A549 (cell line): ENCODE measurements at regions of chr10 and their contacts with region 1.

Region 1: DNA sequence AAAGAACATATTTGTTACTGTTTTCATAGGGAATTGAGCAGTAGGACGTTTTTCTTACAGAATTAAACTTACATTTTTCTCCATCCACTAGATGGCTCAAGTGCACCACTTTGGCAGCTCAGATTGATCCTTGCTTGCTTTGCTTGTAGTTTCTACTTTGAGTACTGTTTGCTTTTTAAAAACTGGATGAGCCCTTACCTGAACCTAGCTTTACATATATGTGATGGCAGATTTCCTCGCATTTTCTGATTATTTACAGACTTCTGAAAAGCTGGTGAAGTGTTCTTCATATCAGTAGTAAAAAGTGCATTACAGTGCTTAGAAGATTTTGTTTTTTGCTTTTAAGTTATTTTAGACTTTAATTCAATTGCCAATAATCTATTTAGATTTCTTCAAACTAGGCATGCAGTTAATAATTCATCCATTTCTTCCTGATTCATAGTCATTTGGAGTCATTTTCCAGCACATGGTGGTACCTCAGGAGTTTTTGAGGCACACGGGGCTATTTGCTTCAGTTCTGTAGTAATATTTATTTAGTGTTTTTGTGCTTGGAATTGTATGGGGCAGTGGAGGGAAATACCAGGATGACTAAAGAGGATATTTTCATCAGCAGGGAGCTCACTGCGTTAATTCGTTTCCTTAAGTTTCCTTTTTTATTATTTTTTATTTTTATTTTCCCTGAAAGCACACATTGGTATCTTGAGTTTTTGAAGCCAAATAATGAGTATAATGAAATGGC is 57.3 kb downstream of the MAPK8 start:
- DNase-seq: peak; percentile 28 to 80
- ATAC-seq: peak; percentile 90 to 92
- H3K4me3 ChIP-seq: no peak overlapping the region
- H3K27ac ChIP-seq: peak overlapping the region; percentile 19 to 57
- H3K4me1 ChIP-seq: peaks cover 34% of the 10 kb centered on the region
- CTCF ChIP-seq: peak; percentile 95
- EP300 ChIP-seq: no peak
- POLR2A ChIP-seq: no peak
- RAD21 ChIP-seq: peak; percentile 90 to 94

Region 2: DNA sequence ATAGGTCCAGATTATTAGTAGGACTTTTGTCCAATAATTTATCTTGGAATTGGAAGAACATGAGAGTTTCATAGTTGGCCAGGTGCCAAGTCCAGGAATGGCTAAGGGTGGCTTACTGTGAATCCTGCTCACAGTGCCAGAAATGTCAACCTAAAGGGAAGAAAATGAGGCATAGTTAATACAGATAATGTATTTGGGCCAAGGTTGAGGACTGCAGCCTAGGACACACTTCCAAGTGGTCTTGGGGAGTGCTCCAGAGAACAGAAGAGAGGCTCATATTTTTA is 20.9 kb after region 1 on chr10:
- CTCF ChIA-PET with region 1: interaction called, 10 read pairs
- POLR2A ChIA-PET with region 1: no interaction called
- DNase-seq: no peak
- ATAC-seq: no peak
- H3K4me3 ChIP-seq: no peak overlapping the region
- H3K27ac ChIP-seq: no peak overlapping the region
- H3K4me1 ChIP-seq: peaks cover 7% of the 10 kb centered on the region; the same call in 2 of the 3 replicates
- CTCF ChIP-seq: no peak
- EP300 ChIP-seq: no peak
- POLR2A ChIP-seq: no peak
- RAD21 ChIP-seq: no peak

Region 3: DNA sequence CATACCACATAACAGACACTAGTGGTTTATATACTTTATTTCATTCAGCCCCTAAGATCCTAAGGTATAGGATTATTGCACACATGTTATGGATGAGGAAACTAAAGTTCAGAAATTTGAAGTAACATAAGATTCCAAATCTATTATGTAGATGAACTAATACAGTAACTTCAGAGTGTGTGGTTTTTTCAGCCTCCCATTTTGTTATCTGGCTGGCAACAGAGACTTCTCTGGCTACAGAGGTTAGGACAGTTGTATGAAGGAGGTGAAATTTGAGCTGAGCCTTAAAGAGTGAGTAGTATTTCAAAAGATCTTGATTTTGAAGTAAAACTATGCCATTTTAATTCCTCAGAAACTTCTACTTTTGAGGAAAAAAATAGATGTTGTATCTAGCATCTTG is 68.1 kb after region 1 on chr10:
- CTCF ChIA-PET with region 1: no interaction called
- POLR2A ChIA-PET with region 1: no interaction called
- DNase-seq: no peak
- ATAC-seq: no peak
- H3K4me3 ChIP-seq: no peak overlapping the region
- H3K27ac ChIP-seq: no peak overlapping the region
- H3K4me1 ChIP-seq: no peaks in the 10 kb centered on the region
- CTCF ChIP-seq: no peak
- EP300 ChIP-seq: no peak
- POLR2A ChIP-seq: no peak
- RAD21 ChIP-seq: no peak

Region 4: GRCh38 chr10:48506147-48506917 is 142.5 kb after region 1 on chr10:
- CTCF ChIA-PET with region 1: interaction called, 14 read pairs
- POLR2A ChIA-PET with region 1: no interaction called
- DNase-seq: peak; percentile 32 to 66
- ATAC-seq: peak; percentile 54 to 82; a peak in 4 of 6 replicates
- H3K4me3 ChIP-seq: no peak overlapping the region
- H3K27ac ChIP-seq: no peak overlapping the region
- H3K4me1 ChIP-seq: peaks cover 6% of the 10 kb centered on the region; the same call in 1 of the 3 replicates
- CTCF ChIP-seq: peak; percentile 44
- EP300 ChIP-seq: no peak
- POLR2A ChIP-seq: no peak
- RAD21 ChIP-seq: peak; percentile 45 to 62